ENCODE measurements at regions of chr3 and their contacts with region 1.

Region 1: DNA sequence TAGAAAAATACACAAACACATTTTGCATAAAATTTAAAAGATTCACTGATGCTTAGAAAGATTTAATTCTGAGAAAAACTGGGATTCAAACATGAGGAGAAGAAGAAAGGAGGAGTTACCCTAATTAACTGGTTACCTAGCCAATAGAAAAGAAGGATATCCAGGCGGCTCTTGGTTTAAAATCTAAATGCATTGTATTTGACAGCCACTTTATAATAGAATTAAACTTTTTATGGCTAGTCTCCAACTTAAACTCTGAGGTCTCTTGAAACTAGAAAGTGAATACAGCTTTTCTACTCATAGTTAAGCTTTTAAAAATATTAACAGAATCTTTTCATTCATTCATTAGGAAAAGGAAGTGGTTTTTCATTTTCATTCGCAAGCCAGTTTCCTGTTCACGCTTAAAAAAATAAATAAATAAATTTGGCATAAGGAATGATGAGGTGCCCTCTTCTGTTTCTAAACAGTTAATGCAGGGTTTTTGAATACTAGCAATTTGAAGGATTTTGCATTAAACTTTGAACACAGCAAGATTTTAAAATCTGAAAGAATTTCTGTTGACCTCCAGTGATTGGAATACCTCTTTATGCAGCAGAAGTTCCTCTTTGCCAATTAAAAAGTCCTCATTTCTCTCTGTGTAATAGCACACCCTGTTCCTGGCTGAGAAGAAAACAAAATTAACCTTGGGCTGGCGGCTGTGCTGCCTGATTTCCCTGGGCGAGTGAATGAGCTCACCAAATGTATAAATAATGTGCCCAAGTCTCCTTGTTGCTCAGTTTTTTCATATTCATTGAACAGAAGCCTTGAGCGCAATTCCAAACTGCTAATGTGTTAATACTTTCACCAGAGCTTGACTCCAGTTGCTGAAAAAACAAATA is 105.1 kb downstream of the ZMAT3 start:
- DNase-seq: peak; percentile 62
- H3K4me3 ChIP-seq: peak overlapping the region; percentile 62
- H3K27ac ChIP-seq: peak overlapping the region; percentile 90
- H3K4me1 ChIP-seq: peaks cover 44% of the 10 kb centered on the region
- CTCF ChIP-seq: peak; percentile 89

Region 2: DNA sequence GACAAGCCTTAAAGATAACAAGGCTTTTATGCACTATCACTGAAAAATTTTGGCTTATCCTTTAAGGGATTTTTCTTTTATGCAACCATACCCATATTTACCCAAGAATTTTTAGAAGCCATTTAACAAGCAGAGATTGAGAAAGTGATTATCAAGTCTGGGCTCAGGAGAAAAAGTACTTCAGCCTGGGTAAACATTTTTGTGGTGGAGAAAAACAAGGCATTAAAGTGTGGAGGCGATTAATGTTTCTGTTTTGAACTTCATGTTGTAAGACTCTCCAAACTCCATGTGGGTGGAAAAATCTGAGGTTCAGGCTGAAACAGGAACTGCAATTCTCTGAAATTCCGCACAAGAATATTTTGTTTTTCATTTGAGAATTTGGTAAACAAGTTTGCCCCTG is 690.7 kb before region 1 on chr3:
- CTCF ChIA-PET with region 1: no interaction called
- POLR2A ChIA-PET with region 1: no interaction called
- intact Hi-C with region 1: no loop called
- DNase-seq: no peak
- H3K4me3 ChIP-seq: no peak overlapping the region
- H3K27ac ChIP-seq: no peak overlapping the region
- H3K4me1 ChIP-seq: no peaks in the 10 kb centered on the region
- CTCF ChIP-seq: no peak

Region 3: GRCh38 chr3:178436773-178437172 is 529.8 kb before region 1 on chr3:
- CTCF ChIA-PET with region 1: no interaction called
- POLR2A ChIA-PET with region 1: no interaction called
- intact Hi-C with region 1: loop called (anchors 1 kb)
- DNase-seq: peak; percentile 52
- H3K4me3 ChIP-seq: no peak overlapping the region
- H3K27ac ChIP-seq: no peak overlapping the region
- H3K4me1 ChIP-seq: no peaks in the 10 kb centered on the region
- CTCF ChIP-seq: peak; percentile 85

Region 4: DNA sequence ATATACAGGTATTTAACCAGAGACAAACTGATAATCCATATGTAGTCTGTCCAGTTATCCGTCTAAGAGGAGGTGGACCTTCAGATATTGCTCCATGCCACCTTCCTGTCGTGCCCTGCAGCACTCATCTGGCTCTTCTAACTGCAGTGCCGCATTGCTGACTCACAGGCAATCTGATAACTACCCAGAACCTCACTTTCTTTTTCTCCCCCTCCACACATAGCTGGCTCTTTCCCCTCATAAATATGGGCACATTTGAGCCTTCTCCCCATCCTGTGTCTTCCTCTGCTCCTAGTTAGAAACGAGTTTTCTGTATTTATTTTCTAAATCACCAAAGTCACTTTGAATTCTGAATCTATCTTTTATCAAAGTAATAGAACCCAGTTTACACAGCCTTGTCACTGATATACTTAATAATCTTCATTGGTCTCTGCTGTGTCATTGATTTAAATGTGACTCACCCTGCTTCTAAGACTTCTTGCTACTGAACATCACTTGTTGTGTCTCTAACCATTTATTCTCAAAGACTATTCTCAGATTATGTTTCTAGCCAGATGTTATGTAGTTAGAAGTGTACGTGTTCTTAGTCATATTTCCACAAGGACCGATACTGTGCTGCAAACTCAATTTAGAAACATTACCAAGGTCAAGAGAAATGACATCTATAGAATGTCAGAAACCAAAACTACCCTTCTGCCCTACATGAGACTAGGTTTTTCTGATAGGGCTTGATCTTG is 447.7 kb before region 1 on chr3:
- CTCF ChIA-PET with region 1: no interaction called
- POLR2A ChIA-PET with region 1: no interaction called
- intact Hi-C with region 1: loop called (anchors 5 kb)
- DNase-seq: no peak
- H3K4me3 ChIP-seq: no peak overlapping the region
- H3K27ac ChIP-seq: no peak overlapping the region
- H3K4me1 ChIP-seq: no peaks in the 10 kb centered on the region
- CTCF ChIP-seq: no peak

Measured in OCI-LY7 (cell line).